IMR-90 (cell line): ENCODE measurements at regions of chr9 and their contacts with region 1.

Region 1: DNA sequence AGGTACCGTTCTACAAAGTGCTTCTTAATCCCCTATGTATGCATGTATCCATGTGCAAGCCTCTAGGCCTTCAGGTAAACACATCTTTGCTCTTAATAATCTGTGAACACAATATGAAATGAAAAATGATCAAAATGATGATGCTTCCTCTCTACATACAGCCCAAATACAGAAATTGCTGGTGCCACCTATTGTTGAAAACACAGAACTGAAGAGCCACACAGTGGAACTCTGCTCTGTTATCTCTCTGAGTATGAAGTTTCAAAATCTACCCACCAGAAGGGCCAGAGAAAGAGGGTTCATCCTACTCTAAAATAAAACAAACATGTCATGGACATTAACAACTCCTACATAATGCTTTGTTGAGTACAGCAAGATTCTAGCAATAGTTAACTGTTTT is 71.3 kb downstream of the GLIS3 start:
- DNase-seq: peak; percentile 59
- ATAC-seq: peak; percentile 76
- H3K4me3 ChIP-seq: no peak overlapping the region
- H3K27ac ChIP-seq: no peak overlapping the region
- H3K4me1 ChIP-seq: peaks cover 6% of the 10 kb centered on the region
- H3K27me3 ChIP-seq: no peaks in the 10 kb centered on the region
- CTCF ChIP-seq: peak; percentile 63
- POLR2A ChIP-seq: no peak
- RAD21 ChIP-seq: peak; percentile 75

Region 2: GRCh38 chr9:3467593-3468219 is 760.9 kb before region 1 on chr9:
- CTCF ChIA-PET with region 1: interaction called, 3 read pairs
- POLR2A ChIA-PET with region 1: no interaction called
- dilution Hi-C with region 1: no loop called
- in situ Hi-C with region 1: no loop called
- intact Hi-C with region 1: loop called (anchors 5 kb)
- DNase-seq: peak; percentile 72
- ATAC-seq: peak; percentile 100
- H3K4me3 ChIP-seq: no peak overlapping the region
- H3K27ac ChIP-seq: no peak overlapping the region
- H3K4me1 ChIP-seq: no peaks in the 10 kb centered on the region
- H3K27me3 ChIP-seq: no peaks in the 10 kb centered on the region
- CTCF ChIP-seq: peak; percentile 91
- POLR2A ChIP-seq: peak; percentile 54; the same call in 1 of the 2 replicates
- RAD21 ChIP-seq: peak; percentile 95

Region 3: DNA sequence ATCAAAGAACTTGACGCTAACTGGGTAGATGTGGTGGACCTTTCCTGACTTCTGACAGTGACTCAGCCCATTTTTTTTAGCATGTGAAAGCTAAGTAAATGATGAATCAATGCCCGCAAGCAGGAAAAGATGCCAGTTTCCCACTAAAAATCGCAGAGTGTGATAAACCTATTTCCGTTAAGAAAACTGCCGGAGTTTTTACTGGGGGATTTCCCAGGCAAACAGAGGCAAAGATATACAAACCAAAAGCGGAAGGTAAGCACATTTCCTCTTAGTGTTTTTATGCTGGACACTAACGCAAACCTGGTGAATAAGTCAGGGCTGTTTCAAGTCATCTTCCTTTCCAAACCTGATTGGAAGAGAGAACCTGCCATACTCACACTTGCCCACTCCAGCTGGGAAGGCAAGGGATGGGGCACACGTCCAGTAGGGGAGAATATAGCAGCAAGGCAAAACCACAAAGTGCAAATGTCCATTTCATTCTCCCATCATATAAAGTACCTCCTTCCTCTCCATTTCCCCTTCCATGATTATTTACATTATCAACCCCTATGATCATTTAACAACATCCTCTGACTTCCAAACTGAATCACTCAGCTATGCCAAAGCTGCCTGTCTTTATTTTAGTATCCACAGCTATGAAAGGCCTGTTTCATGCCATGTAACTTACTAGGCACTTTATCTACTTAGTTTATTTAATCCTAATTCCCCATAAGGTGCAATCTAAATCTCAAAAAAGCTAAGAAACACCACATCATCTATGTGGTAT is 353.1 kb before region 1 on chr9:
- CTCF ChIA-PET with region 1: interaction called, 3 read pairs
- POLR2A ChIA-PET with region 1: no interaction called
- dilution Hi-C with region 1: no loop called
- in situ Hi-C with region 1: no loop called
- intact Hi-C with region 1: loop called (anchors 5 kb)
- DNase-seq: peak; percentile 95
- ATAC-seq: peak; percentile 73
- H3K4me3 ChIP-seq: no peak overlapping the region
- H3K27ac ChIP-seq: peak overlapping the region; percentile 58
- H3K4me1 ChIP-seq: peaks cover 10% of the 10 kb centered on the region
- H3K27me3 ChIP-seq: no peaks in the 10 kb centered on the region
- CTCF ChIP-seq: no peak
- POLR2A ChIP-seq: no peak
- RAD21 ChIP-seq: no peak

Region 4: DNA sequence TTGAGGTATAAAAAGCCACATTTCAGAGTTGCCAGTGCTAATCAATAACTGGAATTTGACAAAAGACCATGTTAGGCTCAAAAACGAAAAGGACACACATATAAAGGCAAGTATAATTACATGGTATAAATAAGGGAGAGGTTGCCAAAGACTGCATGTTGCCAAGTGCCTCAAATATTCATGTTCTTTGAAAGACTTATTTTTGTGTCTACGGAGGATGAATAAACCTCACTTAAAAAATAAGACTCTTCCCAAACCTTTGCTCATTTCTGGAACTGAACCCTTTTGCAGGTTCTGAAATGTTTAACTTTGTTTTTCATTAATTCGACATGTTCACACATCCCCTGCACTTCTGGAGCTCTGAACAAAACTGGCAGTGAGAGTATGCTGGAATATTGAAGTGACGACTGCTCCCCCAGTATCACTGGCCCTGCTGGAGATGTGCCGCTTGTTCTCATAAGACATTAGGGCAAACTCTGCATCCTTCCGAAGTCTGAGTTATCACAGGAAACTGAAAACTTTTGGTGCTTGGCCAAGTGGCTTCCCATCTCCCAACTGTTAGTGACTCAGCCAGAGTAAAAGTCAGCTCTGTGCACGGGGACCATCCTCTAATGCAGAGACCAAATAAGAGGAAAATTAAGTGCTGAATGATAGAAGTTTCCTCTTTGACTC is 265.5 kb before region 1 on chr9:
- CTCF ChIA-PET with region 1: no interaction called
- POLR2A ChIA-PET with region 1: no interaction called
- dilution Hi-C with region 1: no loop called
- in situ Hi-C with region 1: no loop called
- intact Hi-C with region 1: loop called (anchors 1 kb)
- DNase-seq: peak; percentile 93
- ATAC-seq: peak; percentile 80
- H3K4me3 ChIP-seq: no peak overlapping the region
- H3K27ac ChIP-seq: peak overlapping the region; percentile 73; the same call in 1 of the 2 replicates
- H3K4me1 ChIP-seq: peaks cover 14% of the 10 kb centered on the region
- H3K27me3 ChIP-seq: no peaks in the 10 kb centered on the region
- CTCF ChIP-seq: no peak
- POLR2A ChIP-seq: no peak
- RAD21 ChIP-seq: no peak

Region 5: GRCh38 chr9:4086119-4087090 is 142.2 kb before region 1 on chr9:
- CTCF ChIA-PET with region 1: no interaction called
- POLR2A ChIA-PET with region 1: no interaction called
- dilution Hi-C with region 1: no loop called
- in situ Hi-C with region 1: no loop called
- intact Hi-C with region 1: loop called (anchors 2 kb)
- DNase-seq: peak; percentile 43
- ATAC-seq: no peak
- H3K4me3 ChIP-seq: no peak overlapping the region
- H3K27ac ChIP-seq: peak overlapping the region; percentile 42; the same call in 1 of the 2 replicates
- H3K4me1 ChIP-seq: peaks cover 12% of the 10 kb centered on the region
- H3K27me3 ChIP-seq: no peaks in the 10 kb centered on the region
- CTCF ChIP-seq: no peak
- POLR2A ChIP-seq: no peak
- RAD21 ChIP-seq: no peak

Region 6: DNA sequence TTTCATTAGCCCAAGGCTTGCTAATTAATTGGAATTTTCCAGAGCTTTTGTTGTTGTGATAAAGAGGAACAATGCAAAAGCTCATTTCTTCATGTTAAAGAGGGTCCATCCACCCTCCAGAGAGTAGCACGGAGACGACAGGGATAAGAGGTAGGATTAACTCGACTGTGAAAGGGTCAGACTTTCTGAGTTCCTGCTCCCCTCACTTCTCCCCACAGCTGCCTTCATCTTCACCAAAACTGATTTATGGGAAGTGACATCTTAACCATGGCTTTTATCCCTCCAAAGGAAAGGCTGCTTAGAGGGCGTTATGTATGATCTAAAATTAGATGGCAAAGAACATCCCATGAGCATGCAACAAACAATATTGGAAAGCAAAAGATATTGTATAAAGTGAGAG is 64.2 kb before region 1 on chr9:
- CTCF ChIA-PET with region 1: no interaction called
- POLR2A ChIA-PET with region 1: no interaction called
- dilution Hi-C with region 1: no loop called
- in situ Hi-C with region 1: no loop called
- intact Hi-C with region 1: loop called (anchors 5 kb)
- DNase-seq: no peak
- ATAC-seq: no peak; the same call in 1 of the 2 replicates
- H3K4me3 ChIP-seq: peak overlapping the region; percentile 12; the same call in 1 of the 2 replicates
- H3K27ac ChIP-seq: peak overlapping the region; percentile 30; the same call in 1 of the 2 replicates
- H3K4me1 ChIP-seq: peaks cover 16% of the 10 kb centered on the region
- H3K27me3 ChIP-seq: no peaks in the 10 kb centered on the region
- CTCF ChIP-seq: no peak
- POLR2A ChIP-seq: no peak
- RAD21 ChIP-seq: no peak